ENCODE measurements at regions of chr3 and their contacts with region 1.

Region 1: GRCh38 chr3:123757281-123757940 is 126.7 kb downstream of the MYLK start:
- DNase-seq: peak; percentile 69
- H3K4me3 ChIP-seq: no peak overlapping the region
- H3K27ac ChIP-seq: no peak overlapping the region
- H3K4me1 ChIP-seq: peaks cover 30% of the 10 kb centered on the region
- H3K27me3 ChIP-seq: no peaks in the 10 kb centered on the region
- CTCF ChIP-seq: no peak

Region 2: GRCh38 chr3:123834631-123835030 is 77.2 kb after region 1 on chr3:
- CTCF ChIA-PET with region 1: no interaction called
- dilution Hi-C with region 1: loop called (anchors 5 kb)
- in situ Hi-C with region 1: no loop called
- intact Hi-C with region 1: no loop called
- DNase-seq: peak; percentile 94
- H3K4me3 ChIP-seq: no peak overlapping the region
- H3K27ac ChIP-seq: peak overlapping the region; percentile 58
- H3K4me1 ChIP-seq: peaks cover 62% of the 10 kb centered on the region
- H3K27me3 ChIP-seq: no peaks in the 10 kb centered on the region
- CTCF ChIP-seq: no peak